ENCODE measurements at regions of chr12 and their contacts with region 1.

Region 1: DNA sequence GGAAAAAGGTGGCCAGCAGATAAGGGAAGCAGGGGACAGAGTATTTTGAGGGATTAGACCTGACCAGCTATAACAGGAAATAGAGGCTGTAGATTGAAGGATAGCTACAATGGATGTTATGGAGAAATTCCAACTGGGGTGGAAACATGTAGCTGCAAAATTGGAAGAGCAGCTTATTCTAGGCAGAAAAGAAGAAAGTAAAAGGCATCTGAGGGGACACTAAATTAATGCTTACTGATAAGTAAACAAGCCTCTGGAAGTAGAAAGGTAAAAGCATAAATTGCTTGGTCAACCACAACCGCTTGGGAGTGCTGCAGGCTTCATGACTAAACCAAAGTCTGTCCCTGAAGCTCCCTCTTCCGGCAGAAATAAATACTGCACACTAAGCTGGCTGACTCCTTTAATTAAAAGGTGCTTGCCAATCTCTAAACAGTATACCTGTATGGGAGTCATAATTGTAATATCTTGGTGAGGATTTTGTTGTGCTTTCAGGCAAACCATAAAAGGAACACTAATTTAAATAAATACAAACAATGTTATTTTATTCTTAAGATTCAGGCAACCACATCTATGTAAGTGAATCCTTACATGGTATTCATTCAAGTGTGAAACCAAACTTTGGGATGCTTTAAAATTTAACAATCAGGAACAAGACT is 7.7 kb downstream of the UBC start:
- DNase-seq: peak; percentile 81
- CTCF ChIP-seq: peak; percentile 99

Region 2: GRCh38 chr12:124767066-124767821 is 139.5 kb before region 1 on chr12:
- CTCF ChIA-PET with region 1: interaction called, 4 read pairs
- POLR2A ChIA-PET with region 1: interaction called, 10 read pairs
- DNase-seq: peak; percentile 90
- CTCF ChIP-seq: peak; percentile 98

Region 3: DNA sequence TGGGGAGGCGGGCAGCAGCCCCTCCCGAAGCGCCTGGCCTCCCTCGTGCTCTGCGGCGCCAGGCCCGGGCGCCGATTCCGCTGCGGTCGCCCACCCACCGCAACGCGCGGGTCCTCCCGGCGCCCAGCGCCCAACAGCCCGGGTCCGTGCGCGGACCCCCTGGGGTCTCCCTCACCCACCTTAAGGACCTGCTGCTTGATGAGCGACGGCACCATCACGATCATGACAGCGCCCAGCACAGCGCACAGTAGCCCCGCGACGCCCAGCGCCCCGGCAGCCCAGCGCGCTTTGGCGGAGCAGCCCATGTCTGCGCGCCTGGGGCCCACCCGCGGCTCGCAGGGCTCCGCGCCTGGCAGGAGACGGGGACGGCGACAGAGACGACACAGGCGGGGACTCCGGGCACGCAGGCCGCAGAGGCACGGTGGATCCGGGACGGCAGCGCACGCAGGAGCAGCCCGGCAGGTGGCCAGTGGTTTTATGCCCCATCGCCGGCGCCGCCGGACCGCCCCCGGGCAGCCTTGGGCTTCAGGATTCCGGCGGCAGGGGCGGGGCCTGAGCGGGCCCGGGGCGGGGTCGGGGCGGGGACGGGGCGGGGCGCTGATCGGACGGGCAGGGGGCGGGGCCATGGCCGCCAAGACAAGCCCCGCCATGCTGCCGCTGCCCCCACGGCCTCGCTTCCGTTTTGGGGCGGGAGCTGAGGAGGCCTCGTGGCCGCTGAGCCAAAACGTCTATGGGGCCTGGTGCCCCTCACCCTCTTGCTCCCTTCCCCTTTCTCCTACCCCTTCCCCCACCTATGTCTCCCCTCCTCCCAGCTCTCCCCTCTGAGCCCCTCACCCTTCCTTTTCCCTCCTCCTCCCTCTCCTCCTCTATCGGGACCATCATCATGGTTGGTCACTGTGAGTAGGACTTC is 43.1 kb before region 1 on chr12 and contains the start of gene SCARB1:
- CTCF ChIA-PET with region 1: interaction called, 10 read pairs
- POLR2A ChIA-PET with region 1: interaction called, 5 read pairs
- DNase-seq: peak; percentile 99
- CTCF ChIP-seq: no peak

Region 4: DNA sequence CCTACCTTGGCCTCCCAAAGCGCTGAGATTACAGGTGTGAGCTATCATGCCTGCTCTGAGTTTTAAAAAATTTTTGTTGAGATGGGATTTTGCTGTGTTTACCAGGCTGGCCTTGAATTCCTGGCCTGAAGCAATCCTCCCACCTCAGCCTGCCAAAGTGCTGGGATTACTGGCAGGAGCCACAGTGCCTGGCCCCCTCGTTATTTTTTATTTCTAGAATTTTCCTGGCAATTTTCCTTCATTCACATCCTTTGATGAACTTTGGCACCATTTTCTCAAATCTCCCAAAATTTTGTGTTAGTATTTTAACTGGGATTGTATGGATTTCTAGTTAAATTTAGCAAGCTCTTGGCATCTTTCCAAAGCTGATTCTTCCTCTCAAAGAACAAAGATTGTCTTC is 18.5 kb before region 1 on chr12:
- CTCF ChIA-PET with region 1: interaction called, 41 read pairs
- POLR2A ChIA-PET with region 1: interaction called, 3 read pairs
- DNase-seq: no peak
- CTCF ChIP-seq: no peak

Region 5: GRCh38 chr12:124917135-124917840 is 10.6 kb after region 1 on chr12:
- CTCF ChIA-PET with region 1: interaction called, 53 read pairs
- POLR2A ChIA-PET with region 1: interaction called, 17 read pairs
- DNase-seq: peak; percentile 78
- CTCF ChIP-seq: no peak

Region 6: GRCh38 chr12:124947561-124948398 is 41.0 kb after region 1 on chr12:
- CTCF ChIA-PET with region 1: interaction called, 10 read pairs
- POLR2A ChIA-PET with region 1: interaction called, 3 read pairs
- DNase-seq: no peak
- CTCF ChIP-seq: no peak

Region 7: GRCh38 chr12:125079648-125080645 is 173.2 kb after region 1 on chr12:
- CTCF ChIA-PET with region 1: no interaction called
- POLR2A ChIA-PET with region 1: no interaction called
- DNase-seq: no peak
- CTCF ChIP-seq: no peak

Measured in GM10248 (cell line).